K562 (cell line): ENCODE measurements at regions of chr14 and their contacts with region 1.

Region 1: DNA sequence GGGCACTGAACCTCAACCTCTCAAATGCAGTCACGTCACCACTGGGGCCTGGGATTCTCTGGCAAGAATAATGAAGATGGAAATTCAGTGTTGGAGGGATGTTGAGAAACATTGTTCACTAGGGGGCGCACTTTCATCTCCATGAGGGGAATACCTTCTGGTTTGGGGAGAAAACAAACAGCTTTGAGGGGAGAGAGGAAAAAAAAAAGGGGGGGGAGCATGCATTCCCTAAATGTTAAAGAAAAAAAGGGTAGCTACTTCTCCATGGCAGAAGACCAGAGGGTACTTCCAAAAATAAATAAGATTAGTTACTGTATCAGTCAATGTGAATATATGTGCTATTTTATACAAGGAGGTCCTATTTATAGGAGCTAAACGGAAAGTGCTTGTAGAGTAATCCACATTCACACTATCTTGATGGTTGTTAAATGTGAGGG is 5.8 kb upstream of the TBPL2 start:
- DNase-seq: peak; percentile 48 to 81 (median 54)
- ATAC-seq: peak; percentile 91
- H3K4me3 ChIP-seq: no peak overlapping the region
- H3K27ac ChIP-seq: no peak overlapping the region
- H3K4me1 ChIP-seq: no peaks in the 10 kb centered on the region; a peak in 1 of 5 replicates
- H3K27me3 ChIP-seq: no peaks in the 10 kb centered on the region
- CTCF ChIP-seq: peak; percentile 61 to 69 (median 67)
- EP300 ChIP-seq: no peak
- POLR2A ChIP-seq: no peak
- RAD21 ChIP-seq: peak; percentile 57 to 70

Region 2: DNA sequence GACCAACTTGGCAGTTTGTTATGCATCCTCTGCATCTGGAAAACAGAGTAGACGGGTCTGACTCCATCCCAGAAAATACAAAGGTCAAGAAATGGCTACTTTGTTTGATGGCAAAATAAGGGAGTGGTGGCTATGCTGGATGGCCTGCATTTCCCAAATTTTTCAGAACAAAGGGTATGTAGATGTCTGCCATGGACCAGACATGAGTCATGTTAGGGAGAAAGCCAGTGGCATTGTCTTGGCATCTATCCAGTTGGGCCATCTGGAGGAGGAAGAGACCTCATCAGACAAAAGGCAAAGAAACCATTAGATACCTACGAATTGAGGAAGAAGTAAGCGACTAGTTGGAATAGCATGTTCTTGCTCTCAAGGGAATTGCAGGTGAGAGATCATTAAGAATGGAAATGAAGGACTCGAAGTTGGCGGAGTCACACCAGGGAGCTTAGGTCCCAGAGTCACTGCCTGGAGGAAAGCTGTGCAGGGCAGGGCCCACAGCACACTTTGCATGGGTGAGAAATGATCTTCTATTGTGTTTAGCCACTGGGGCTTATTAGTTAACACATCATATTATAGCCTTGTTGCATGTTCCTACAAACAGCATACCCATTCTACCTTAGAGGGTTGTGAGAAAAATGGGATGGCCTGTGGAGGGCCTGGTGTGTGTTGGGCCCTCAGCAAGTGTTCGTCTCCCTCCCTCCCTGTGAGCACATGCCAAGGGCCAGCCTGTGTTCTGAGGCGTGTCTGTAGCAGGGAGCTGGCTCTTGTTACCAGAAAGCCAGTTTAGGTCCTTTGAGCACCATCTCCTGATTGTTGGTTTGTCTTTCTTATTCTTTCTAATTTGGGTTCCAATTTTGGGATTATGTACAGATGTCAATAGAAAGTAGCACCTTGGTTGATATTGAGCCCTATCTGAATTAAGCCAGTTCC is 253.2 kb after region 1 on chr14:
- CTCF ChIA-PET with region 1: no interaction called
- POLR2A ChIA-PET with region 1: no interaction called
- in situ Hi-C with region 1: no loop called
- intact Hi-C with region 1: loop called (anchors 10 kb)
- DNase-seq: no peak
- ATAC-seq: no peak
- H3K4me3 ChIP-seq: no peak overlapping the region
- H3K27ac ChIP-seq: no peak overlapping the region
- H3K4me1 ChIP-seq: no peaks in the 10 kb centered on the region
- H3K27me3 ChIP-seq: peaks cover 0 to 6% of the 10 kb centered on the region in 2 experiments; a peak in 1 of 5 replicates
- CTCF ChIP-seq: no peak
- EP300 ChIP-seq: no peak
- POLR2A ChIP-seq: no peak
- RAD21 ChIP-seq: no peak

Region 3: GRCh38 chr14:55721353-55721752 is 275.1 kb after region 1 on chr14:
- CTCF ChIA-PET with region 1: no interaction called
- POLR2A ChIA-PET with region 1: no interaction called
- in situ Hi-C with region 1: no loop called
- intact Hi-C with region 1: loop called (anchors 10 kb)
- DNase-seq: no peak
- ATAC-seq: no peak
- H3K4me3 ChIP-seq: no peak overlapping the region
- H3K27ac ChIP-seq: no peak overlapping the region
- H3K4me1 ChIP-seq: no peaks in the 10 kb centered on the region
- H3K27me3 ChIP-seq: peaks cover 0 to 7% of the 10 kb centered on the region in 2 experiments; a peak in 2 of 5 replicates
- CTCF ChIP-seq: no peak
- EP300 ChIP-seq: no peak
- POLR2A ChIP-seq: no peak
- RAD21 ChIP-seq: no peak